Heart right ventricle (tissue), 16 donors: ENCODE measurements at regions of chr10 and their contacts with region 1.

Region 1: DNA sequence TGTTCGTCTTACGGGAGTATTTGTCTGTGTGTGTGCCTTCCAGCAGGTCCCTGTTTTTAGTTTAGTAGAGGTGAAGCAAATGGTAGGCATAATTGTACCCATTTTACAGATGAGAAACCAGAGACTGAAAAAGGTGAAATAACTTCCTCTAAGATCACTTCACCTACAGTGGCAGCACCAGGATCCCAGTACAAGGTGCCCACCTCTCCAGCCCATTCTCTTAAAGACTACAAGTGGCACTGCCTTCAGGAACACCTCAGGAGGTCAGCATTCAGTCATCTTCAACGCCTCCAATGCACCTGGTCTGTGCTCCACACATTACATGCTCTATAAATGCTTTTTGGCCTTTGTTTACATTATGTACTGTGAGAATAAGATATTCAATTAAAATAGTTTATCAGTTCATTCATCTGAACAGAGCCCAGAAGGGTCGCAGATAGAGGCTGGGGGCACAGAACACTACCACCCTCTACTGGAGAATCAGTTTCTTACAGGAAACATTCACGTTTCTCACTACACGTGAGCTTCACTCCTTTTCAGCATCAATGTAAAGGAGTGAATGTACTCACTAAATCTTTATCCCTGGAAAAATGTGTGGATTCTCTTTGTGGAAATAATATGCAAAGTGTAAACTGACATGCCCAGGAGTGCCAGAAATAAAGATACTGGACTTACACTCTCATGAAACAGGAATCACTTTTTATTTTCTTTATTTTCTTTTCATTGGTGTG is 45.5 kb upstream of the ABLIM1 start:
- DNase-seq: no peak
- ATAC-seq: peak in 7 of 8 donors; percentile 32 to 54 (median 42)
- H3K4me3 ChIP-seq: no peak overlapping the region
- H3K27ac ChIP-seq: peak overlapping the region in 2 of 10 donors; percentile 27 to 38
- H3K4me1 ChIP-seq: peaks cover 0 to 59% (median 26%) of the 10 kb centered on the region in 9 donors
- H3K27me3 ChIP-seq: no peaks in the 10 kb centered on the region
- CTCF ChIP-seq: peak; percentile 31 to 76 (median 62)

Region 2: DNA sequence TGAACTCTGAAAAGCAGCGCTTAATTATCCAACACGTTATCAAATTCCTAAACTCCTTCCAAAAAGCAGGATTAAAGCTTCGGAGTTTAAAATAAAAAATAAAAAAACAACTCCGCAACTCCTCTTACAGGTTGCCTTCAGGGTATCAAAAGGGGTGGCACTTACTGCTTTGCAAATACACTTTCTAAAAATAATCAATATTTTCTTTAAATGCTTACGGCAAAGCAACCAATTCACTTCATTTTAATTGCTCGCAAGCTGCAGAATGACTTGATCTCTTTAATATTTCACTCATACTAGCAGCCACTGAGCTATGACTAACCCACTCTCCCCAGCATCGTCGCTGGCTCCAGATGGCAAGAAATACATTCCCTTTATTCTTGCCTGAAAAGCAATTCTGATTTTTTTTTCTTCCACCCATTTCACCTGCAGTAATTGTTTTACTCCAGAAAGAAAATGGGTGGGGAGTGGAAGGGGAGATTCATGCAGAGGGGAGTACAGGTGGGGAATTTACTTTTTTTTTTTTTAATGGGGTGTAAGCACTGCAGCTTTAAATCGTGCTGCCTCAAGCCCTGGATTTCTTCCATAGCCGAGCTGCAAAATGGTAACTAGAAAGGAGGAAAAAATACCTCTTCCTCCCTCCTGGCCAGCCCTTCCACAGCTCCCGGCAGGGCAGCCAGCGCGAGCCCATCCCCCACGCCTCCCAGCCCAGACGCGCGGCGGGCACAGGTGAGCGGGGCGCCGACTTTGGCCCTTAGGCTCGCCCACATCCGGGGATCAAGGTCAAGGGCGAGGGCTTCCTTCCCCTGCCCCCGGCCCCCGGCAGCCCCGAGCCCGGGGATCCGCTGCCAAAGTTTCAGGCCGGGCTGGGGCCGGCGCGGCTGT is 63.8 kb after region 1 on chr10:
- intact Hi-C with region 1: loop called in 2 of 10 experiments (anchors 5 to 10 kb)
- DNase-seq: peak in 1 of 2 donors; percentile 48
- ATAC-seq: peak; percentile 64 to 86 (median 78)
- H3K4me3 ChIP-seq: peak overlapping the region; percentile 69 to 92 (median 86)
- H3K27ac ChIP-seq: peak overlapping the region; percentile 85 to 96 (median 93)
- H3K4me1 ChIP-seq: peaks cover 0 to 47% (median 21%) of the 10 kb centered on the region in 9 donors
- H3K27me3 ChIP-seq: peaks cover 0 to 36% (median 0%) of the 10 kb centered on the region in 7 donors
- CTCF ChIP-seq: no peak

Region 3: DNA sequence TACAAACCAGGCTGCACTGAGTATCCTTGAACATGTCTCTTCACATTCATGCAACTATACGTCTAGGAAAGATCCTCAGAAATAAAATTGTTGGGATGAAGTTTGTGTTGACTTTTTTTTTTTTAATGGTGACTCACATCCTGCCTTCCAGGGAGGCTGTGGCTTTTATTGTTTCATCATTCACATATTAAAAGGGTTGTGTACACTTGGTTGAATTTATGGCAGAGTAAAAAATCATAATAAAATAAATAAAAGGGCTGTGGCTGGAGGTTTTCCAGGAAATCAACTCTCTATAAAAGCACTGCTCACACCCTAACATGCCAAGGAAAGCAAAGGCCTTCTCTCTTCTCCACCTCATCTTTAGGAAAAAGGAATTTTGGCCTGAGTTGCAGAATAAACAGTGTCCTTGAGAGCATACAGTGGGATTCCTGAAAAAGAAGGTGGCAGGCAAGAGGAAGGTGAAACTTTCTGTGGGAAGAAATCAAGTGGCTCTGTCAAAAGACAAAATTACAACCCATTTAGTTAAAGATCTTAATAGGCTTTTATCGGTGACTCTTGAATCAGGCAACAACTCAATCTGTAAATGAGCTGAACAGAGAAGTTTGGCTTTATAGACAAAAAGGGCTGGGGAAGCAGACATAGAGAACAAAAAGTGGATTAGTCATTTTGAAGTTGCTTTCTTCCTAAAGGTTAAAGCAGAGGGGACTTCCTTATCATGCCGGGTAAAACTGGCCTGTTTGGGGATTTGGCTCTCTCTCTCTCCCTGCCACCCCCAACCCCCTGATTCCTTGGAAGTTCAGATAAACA is 76.5 kb after region 1 on chr10:
- intact Hi-C with region 1: loop called in 1 of 10 experiments (anchors 10 kb)
- DNase-seq: no peak
- ATAC-seq: peak in 5 of 8 donors; percentile 38 to 76 (median 51)
- H3K4me3 ChIP-seq: no peak overlapping the region
- H3K27ac ChIP-seq: peak overlapping the region in 7 of 10 donors; percentile 16 to 51 (median 37)
- H3K4me1 ChIP-seq: peaks cover 0 to 37% (median 13%) of the 10 kb centered on the region in 9 donors
- H3K27me3 ChIP-seq: no peaks in the 10 kb centered on the region
- CTCF ChIP-seq: no peak

Region 4: DNA sequence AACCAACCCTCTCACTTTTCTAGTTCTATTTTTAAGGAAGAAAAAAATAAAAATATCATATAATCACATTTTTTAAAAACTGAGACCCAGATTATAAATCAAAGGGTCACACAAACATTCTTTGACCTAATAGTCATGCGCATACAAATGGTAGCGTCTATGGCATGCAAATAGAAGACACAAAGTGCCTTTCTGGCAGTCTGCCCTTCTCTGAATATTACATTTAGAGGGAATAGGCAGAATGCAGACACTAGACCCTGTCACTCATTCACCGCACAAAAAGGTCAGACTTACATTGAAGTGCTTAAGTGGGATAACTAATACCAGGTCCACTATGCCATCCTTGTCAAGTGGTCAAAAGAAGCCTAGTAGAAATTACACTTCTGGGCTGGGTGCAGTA is 91.5 kb after region 1 on chr10:
- intact Hi-C with region 1: no loop called
- DNase-seq: no peak
- ATAC-seq: no peak
- H3K4me3 ChIP-seq: no peak overlapping the region
- H3K27ac ChIP-seq: no peak overlapping the region
- H3K4me1 ChIP-seq: no peaks in the 10 kb centered on the region
- H3K27me3 ChIP-seq: no peaks in the 10 kb centered on the region
- CTCF ChIP-seq: no peak